Dendritic cell treated with granulocyte-macrophage colony-stimulating factor and Interleukin-4, amounts not matched to agents 40 ng/mL and 50 ng/mL, for 4 days (primary cell): ENCODE measurements at regions of chr16 and their contacts with region 1.

Region 1: DNA sequence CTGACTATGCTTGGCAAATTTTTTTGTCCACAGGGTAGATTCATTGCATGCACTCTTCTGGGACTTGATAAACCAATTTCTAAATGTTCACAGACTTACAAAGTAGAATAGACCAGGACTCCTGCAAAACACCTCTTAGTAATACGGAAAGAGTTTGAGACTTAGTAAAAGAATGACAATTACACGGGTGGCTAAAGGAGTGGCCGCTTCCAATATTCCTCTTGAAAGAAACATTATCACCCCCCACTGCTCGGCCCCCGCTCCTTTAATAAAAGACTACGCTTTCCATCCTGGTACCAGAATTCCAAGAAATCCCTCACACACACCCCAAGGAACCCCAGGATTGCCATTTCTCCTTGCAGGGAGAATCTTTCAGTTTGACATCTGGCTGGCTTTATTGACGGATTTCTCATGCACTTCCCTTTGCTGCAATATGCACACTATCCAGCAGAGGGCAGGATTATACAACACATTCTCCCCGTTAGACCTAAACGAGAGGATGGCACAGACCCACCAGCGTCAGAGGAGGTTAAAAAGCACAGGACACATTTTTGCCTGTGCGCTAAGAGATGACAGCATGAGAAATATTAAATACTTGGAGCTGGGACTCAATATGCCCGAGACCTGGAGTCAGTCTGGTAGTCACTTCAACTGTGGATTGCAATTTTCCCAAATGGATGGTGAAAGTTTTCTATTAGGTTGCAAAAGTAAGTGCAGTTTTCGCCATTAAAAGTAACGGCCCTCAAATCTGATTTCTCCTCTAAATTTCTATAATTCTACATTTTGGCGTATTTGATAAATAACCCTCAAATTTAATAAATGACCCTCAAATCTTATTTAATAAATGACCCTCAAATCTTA is 46.6 kb upstream of the NUDT7 start:
- H3K4me3 Mint-ChIP-seq: no peak overlapping the region
- H3K27ac Mint-ChIP-seq: no peak overlapping the region
- H3K4me1 Mint-ChIP-seq: peaks cover 5% of the 10 kb centered on the region
- H3K27me3 Mint-ChIP-seq: no peaks in the 10 kb centered on the region

Region 2: GRCh38 chr16:77782694-77783093 is 107.0 kb after region 1 on chr16:
- intact Hi-C with region 1: loop called (anchors 5 kb)
- H3K4me3 Mint-ChIP-seq: no peak overlapping the region
- H3K27ac Mint-ChIP-seq: no peak overlapping the region
- H3K4me1 Mint-ChIP-seq: no peaks in the 10 kb centered on the region
- H3K27me3 Mint-ChIP-seq: peaks cover 17% of the 10 kb centered on the region

Region 3: DNA sequence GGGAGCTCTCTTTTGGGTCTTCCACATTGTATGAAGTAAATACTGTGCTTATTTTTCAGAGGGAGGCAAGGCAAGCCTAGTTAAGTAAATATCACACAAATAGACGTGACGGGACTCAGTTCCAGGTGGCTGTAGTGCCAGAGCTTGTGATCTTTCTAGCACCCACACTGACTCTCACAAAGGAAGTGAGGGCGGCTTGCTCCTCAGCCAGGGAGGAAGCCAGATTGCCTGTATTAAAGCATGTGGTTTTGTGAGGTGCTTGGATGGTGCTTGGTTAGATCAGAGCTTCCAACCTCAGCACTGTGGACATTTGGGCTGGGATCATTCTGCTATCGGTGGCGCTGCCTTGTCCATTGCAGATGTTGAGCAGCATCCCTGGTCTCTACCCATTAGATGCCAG is 192.8 kb after region 1 on chr16:
- intact Hi-C with region 1: no loop called
- H3K4me3 Mint-ChIP-seq: no peak overlapping the region
- H3K27ac Mint-ChIP-seq: no peak overlapping the region
- H3K4me1 Mint-ChIP-seq: peaks cover 11% of the 10 kb centered on the region
- H3K27me3 Mint-ChIP-seq: peaks cover 5% of the 10 kb centered on the region

Region 4: DNA sequence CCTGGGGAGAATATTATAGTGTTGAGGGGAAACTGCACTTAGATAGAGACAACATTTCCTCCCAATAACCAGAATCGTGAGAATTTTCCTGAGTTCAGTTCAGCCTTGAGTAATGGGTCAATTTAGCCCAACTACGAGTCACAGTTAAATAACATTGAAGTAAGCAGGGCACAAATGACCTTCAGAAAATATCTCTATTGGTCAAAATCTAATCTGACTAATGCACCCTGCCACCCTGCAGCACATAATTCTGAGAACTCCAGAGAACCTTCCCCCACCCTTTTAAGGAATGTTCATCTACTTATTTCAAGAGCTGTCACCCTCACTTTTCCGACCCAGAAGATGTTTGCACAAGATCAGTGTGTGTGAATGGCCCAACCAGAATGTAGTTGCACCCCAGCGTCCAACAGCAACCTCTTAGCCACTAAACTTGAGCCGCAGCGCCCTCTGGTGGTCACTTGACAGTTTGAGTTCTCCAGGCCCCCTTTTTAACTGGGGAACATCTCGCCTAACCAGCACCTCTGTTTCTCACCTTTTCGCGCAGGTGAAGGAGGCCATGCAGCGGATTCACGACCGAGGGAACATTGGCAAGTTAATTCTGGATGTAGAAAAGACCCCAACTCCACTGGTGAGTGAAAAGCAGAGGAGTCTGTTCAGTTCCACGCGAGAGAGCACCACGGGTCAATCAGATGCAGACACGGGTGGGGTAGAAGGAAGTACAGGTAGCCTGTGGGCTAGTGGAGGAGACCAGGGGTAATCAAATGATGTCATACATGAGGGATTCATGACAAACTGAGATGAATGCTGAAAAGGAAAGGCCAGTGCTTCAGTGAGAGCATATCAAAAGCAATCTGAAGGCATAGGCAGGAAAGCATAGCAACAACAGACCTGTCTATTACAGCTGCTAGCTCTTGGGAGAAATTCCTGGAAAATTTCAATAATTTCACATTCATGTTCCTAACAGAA is 295.9 kb after region 1 on chr16:
- intact Hi-C with region 1: loop called (anchors 1 kb)
- H3K4me3 Mint-ChIP-seq: no peak overlapping the region
- H3K27ac Mint-ChIP-seq: no peak overlapping the region
- H3K4me1 Mint-ChIP-seq: no peaks in the 10 kb centered on the region
- H3K27me3 Mint-ChIP-seq: peaks cover 3% of the 10 kb centered on the region

Region 5: GRCh38 chr16:78002915-78003538 is 327.3 kb after region 1 on chr16:
- intact Hi-C with region 1: loop called (anchors 1 kb)
- H3K4me3 Mint-ChIP-seq: no peak overlapping the region
- H3K27ac Mint-ChIP-seq: no peak overlapping the region
- H3K4me1 Mint-ChIP-seq: no peaks in the 10 kb centered on the region
- H3K27me3 Mint-ChIP-seq: peaks cover 7% of the 10 kb centered on the region